G401 (cell line): ENCODE measurements at regions of chr11 and their contacts with region 1.

Region 1: DNA sequence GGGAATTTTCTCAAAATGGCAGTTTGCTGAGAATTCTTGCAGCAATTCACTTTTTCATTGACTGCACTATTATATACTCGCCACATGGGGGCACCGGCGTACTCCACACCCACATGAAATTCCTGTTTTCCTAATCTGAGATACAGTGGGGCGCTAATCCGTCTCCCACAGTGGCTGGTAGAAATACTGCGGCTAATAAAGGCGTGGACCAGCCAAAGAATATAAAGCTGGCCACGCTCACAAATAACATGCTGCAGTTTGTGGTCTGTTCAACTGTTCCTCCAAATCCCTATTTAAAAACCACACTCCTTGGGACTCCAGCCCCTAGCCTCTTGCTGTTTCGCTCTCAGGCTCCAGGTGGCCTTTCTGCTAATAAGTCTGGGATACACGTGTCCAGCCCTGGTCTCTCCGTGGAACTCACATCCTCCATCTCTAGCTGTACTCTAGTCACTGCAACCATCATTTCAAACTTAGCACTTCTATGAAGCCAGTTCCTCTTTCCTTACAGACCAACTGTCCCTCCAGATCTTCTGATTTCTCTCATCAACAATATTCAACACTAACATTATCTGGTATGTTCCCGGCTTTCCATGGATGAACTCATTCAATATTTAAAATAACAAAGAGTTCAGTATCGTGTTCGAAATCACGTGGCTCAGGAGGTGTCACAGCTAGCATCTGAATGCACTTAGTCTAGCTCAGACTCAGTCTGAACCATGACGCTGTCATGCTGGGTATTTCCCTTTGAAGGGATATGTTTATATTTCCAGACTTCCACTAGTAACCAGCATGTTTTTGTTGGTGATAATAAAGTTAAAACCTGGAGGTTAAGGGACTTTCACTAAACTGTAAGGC is 22.0 kb downstream of the TBRG1 start:
- DNase-seq: peak; percentile 82

Region 2: DNA sequence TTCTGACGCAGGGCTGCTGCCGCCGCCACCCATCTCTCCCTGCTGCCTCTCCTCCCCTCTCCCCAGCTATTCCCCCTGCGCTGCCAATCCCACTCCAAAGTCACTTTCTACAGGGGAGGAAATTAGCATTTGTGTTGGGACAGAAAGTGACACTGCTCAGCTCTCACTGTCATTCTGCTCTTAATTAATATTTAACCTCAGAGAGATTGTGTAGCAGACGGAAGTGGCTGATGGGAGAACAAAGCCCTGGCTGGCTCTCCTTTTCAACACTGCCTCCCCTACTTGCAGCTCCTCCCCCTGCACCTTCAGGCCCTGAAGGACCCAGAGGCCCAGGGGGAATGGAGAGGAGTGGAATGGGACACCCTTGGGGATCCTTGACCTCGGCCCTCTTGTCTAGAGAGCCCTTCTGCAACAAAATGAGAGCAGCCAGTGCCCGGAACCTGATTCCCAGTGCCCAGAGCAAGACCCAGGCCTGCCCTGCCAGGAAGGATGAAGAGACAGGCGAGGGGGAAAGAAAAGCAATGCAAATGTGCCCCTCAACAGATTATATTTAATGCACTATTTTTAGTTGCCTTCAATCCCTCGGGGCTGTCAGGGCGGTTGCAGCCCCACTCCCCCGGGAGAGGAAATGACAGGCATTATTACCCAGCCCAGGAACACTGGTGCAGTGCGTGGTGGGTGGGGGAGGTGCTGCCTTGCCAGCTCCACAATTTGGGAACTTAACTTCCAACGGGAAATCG is 80.5 kb after region 1 on chr11:
- in situ Hi-C with region 1: no loop called
- DNase-seq: no peak

Region 3: GRCh38 chr11:124837491-124837856 is 192.8 kb after region 1 on chr11:
- in situ Hi-C with region 1: loop called (anchors 5 kb)
- DNase-seq: peak; percentile 53